ENCODE measurements at regions of chr9 and their contacts with region 1.

Region 1: GRCh38 chr9:70602321-70603019 is 188.0 kb upstream of the KLF9 start:
- DNase-seq: peak; percentile 81
- H3K4me3 ChIP-seq: no peak overlapping the region
- H3K27ac ChIP-seq: no peak overlapping the region
- H3K4me1 ChIP-seq: peaks cover 22% of the 10 kb centered on the region
- H3K27me3 ChIP-seq: no peaks in the 10 kb centered on the region
- CTCF ChIP-seq: peak; percentile 81

Region 2: DNA sequence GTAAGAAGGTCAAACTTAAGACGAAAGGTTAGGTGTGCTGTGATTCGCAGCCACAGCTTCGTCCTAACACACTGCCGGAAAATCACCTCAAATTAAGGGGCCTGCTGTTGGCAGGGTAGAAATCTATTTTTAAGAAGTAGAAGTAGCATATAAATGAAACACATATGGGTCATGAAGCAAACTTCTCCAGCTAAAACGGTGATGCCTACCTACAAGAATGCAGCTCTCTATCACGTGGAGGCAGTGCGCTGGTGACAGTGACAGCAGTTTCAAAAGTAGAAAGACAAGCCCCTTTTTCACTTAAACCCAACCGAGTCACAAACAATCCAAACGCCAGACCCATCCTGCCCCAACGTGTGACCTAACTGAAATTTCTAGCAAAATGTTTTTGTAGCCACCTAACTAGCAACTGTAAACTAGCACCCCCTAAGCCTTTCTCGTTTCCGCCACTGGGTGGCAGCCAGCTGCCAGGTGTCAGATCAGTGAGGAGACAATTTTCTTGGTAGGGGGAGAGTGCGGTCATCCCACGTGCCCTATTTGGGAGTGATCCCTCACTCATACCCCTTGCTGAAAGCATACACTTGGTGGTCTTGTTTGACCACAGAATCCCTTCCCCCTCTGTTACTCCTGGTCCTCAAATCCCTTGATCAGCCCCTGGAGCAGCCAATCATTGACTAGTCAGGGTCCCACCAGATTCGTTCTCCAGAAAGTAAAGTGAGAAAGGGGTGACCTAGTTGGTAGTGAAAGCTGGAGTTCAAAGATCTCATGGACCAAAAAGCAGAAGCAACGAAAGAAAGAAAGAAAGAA is 630.6 kb before region 1 on chr9:
- CTCF ChIA-PET with region 1: interaction called, 4 read pairs
- POLR2A ChIA-PET with region 1: no interaction called
- intact Hi-C with region 1: loop called (anchors 1 kb)
- DNase-seq: peak; percentile 60
- H3K4me3 ChIP-seq: no peak overlapping the region
- H3K27ac ChIP-seq: no peak overlapping the region
- H3K4me1 ChIP-seq: no peaks in the 10 kb centered on the region
- H3K27me3 ChIP-seq: no peaks in the 10 kb centered on the region
- CTCF ChIP-seq: peak; percentile 85

Region 3: GRCh38 chr9:70111042-70111602 is 491.3 kb before region 1 on chr9:
- CTCF ChIA-PET with region 1: interaction called, 7 read pairs
- POLR2A ChIA-PET with region 1: no interaction called
- intact Hi-C with region 1: loop called (anchors 5 kb)
- DNase-seq: peak; percentile 58
- H3K4me3 ChIP-seq: no peak overlapping the region
- H3K27ac ChIP-seq: no peak overlapping the region
- H3K4me1 ChIP-seq: no peaks in the 10 kb centered on the region
- H3K27me3 ChIP-seq: peaks cover 7% of the 10 kb centered on the region
- CTCF ChIP-seq: peak; percentile 94

Region 4: DNA sequence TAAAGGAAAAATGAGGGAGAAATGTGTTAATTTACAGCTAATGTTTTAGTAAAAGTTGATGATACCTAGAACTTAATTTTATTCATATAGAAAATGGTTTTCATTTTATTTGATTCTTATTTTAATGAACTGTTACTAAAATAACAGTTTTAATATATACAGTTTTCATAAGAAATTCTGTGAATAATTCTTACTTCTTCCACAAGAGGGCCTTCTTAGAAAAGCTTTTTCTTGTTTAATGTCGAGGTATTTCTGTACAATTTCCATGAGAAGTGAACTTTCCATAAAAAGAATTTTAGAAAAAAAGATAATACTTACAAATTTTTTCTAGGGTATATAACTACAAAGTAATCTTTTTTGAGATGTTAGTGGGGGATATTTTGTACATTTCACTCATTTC is 261.9 kb before region 1 on chr9:
- CTCF ChIA-PET with region 1: interaction called, 20 read pairs
- POLR2A ChIA-PET with region 1: no interaction called
- intact Hi-C with region 1: loop called (anchors 1 kb)
- DNase-seq: peak; percentile 37
- H3K4me3 ChIP-seq: no peak overlapping the region
- H3K27ac ChIP-seq: no peak overlapping the region
- H3K4me1 ChIP-seq: no peaks in the 10 kb centered on the region
- H3K27me3 ChIP-seq: no peaks in the 10 kb centered on the region
- CTCF ChIP-seq: peak; percentile 59; the same call in 1 of the 2 replicates

Region 5: DNA sequence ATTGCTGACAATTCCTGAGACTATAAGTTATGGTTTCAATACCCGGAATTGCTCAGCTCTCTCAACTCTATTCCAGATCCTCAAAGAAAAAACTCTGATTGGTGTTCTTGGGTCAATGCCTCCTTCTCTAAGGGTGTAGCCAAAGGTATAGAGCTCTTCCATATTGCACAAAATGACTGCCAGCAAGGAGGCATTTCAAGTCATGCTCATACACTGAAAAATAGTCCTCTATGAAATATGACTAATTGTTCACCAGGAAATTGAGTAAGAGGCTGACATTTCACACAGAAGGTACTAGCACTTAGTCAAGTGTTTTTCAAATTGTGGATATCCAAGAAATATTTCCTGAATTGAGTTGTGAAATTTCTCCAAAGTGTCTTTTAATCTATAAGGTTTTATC is 77.0 kb before region 1 on chr9:
- CTCF ChIA-PET with region 1: no interaction called
- POLR2A ChIA-PET with region 1: no interaction called
- intact Hi-C with region 1: loop called (anchors 2 kb)
- DNase-seq: no peak
- H3K4me3 ChIP-seq: no peak overlapping the region
- H3K27ac ChIP-seq: no peak overlapping the region
- H3K4me1 ChIP-seq: no peaks in the 10 kb centered on the region
- H3K27me3 ChIP-seq: no peaks in the 10 kb centered on the region
- CTCF ChIP-seq: no peak

Region 6: GRCh38 chr9:70701163-70701562 is 98.7 kb after region 1 on chr9:
- CTCF ChIA-PET with region 1: no interaction called
- POLR2A ChIA-PET with region 1: no interaction called
- intact Hi-C with region 1: no loop called
- DNase-seq: no peak
- H3K4me3 ChIP-seq: no peak overlapping the region
- H3K27ac ChIP-seq: no peak overlapping the region
- H3K4me1 ChIP-seq: no peaks in the 10 kb centered on the region
- H3K27me3 ChIP-seq: no peaks in the 10 kb centered on the region
- CTCF ChIP-seq: no peak

Measured in A673 (cell line).